A673 (cell line): ENCODE measurements at regions of chr5 and their contacts with region 1.

Region 1: DNA sequence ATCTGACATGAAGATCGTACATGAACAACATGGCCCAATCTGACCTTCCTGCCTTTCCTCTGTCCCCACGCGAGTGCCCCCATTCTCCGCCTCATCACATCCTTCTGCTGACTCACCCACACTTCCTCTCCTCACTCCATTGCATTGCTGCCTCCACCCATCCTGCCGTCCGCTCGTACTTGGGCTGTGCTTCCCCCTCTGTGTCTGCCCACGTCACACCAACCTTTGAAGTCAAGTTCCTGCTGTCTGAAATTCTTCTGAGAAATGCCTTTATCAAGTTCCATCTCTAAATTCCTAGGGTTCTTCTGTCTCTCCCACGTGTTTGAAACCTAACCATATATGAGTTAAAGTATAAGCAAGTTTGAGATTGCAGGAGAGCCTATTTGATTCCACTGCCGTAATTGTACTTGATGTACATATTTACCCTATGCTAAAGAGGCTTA is 18.0 kb upstream of the STARD4 start:
- DNase-seq: peak; percentile 54
- H3K4me3 ChIP-seq: no peak overlapping the region
- H3K27ac ChIP-seq: no peak overlapping the region
- H3K4me1 ChIP-seq: no peaks in the 10 kb centered on the region
- H3K27me3 ChIP-seq: no peaks in the 10 kb centered on the region
- CTCF ChIP-seq: no peak

Region 2: DNA sequence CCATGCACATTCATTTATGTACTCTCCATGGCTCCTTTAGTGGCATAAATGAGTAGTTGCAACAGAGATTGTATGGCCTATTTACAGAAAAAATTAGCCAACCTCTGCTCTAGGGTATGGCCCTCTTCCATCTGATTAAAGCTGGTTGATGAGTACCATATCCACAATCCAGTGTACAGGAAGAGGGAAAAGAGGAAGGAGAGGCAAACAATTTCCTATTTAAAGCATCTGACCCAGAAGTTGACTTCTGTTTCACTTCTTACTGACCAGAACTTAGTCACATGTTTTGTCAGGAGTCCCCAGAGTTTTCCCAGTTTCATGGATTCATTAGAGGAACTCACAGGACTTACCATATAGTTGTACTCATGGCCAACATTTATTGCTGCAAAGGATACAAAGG is 50.6 kb after region 1 on chr5:
- CTCF ChIA-PET with region 1: no interaction called
- POLR2A ChIA-PET with region 1: no interaction called
- intact Hi-C with region 1: no loop called
- DNase-seq: no peak
- H3K4me3 ChIP-seq: no peak overlapping the region
- H3K27ac ChIP-seq: no peak overlapping the region
- H3K4me1 ChIP-seq: no peaks in the 10 kb centered on the region
- H3K27me3 ChIP-seq: no peaks in the 10 kb centered on the region
- CTCF ChIP-seq: no peak

Region 3: GRCh38 chr5:111834926-111835598 is 304.7 kb after region 1 on chr5:
- CTCF ChIA-PET with region 1: interaction called, 13 read pairs
- POLR2A ChIA-PET with region 1: no interaction called
- intact Hi-C with region 1: no loop called
- DNase-seq: no peak
- H3K4me3 ChIP-seq: no peak overlapping the region
- H3K27ac ChIP-seq: no peak overlapping the region
- H3K4me1 ChIP-seq: no peaks in the 10 kb centered on the region
- H3K27me3 ChIP-seq: peaks cover 52% of the 10 kb centered on the region
- CTCF ChIP-seq: no peak

Region 4: GRCh38 chr5:111863801-111864200 is 333.5 kb after region 1 on chr5:
- CTCF ChIA-PET with region 1: no interaction called
- POLR2A ChIA-PET with region 1: no interaction called
- intact Hi-C with region 1: no loop called
- DNase-seq: no peak
- H3K4me3 ChIP-seq: no peak overlapping the region
- H3K27ac ChIP-seq: no peak overlapping the region
- H3K4me1 ChIP-seq: no peaks in the 10 kb centered on the region
- H3K27me3 ChIP-seq: no peaks in the 10 kb centered on the region
- CTCF ChIP-seq: no peak

Region 5: DNA sequence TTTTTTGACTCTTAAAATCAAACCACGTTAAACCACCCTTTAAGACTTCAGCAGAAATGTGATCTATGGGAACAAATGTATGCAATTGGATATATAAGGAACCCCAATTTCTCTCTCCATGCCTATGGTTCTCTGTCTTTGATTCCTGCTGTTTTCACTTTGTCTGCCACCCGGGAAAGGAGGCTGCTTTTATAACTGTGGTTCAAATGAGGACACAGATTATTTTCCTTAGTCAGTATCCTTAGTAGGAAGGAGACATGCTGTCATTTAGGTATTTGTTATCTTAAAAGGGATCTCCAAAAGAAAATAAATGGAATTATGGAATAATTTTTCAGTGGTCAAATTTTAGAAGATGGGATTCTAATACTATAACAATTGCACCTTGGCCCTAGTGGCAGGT is 402.8 kb after region 1 on chr5:
- CTCF ChIA-PET with region 1: interaction called, 12 read pairs
- POLR2A ChIA-PET with region 1: no interaction called
- intact Hi-C with region 1: no loop called
- DNase-seq: no peak
- H3K4me3 ChIP-seq: no peak overlapping the region
- H3K27ac ChIP-seq: no peak overlapping the region
- H3K4me1 ChIP-seq: no peaks in the 10 kb centered on the region
- H3K27me3 ChIP-seq: no peaks in the 10 kb centered on the region
- CTCF ChIP-seq: no peak

Region 6: GRCh38 chr5:112097768-112098167 is 567.4 kb after region 1 on chr5:
- CTCF ChIA-PET with region 1: interaction called, 13 read pairs
- POLR2A ChIA-PET with region 1: no interaction called
- intact Hi-C with region 1: no loop called
- DNase-seq: no peak
- H3K4me3 ChIP-seq: no peak overlapping the region
- H3K27ac ChIP-seq: no peak overlapping the region
- H3K4me1 ChIP-seq: no peaks in the 10 kb centered on the region
- H3K27me3 ChIP-seq: no peaks in the 10 kb centered on the region
- CTCF ChIP-seq: no peak

Region 7: DNA sequence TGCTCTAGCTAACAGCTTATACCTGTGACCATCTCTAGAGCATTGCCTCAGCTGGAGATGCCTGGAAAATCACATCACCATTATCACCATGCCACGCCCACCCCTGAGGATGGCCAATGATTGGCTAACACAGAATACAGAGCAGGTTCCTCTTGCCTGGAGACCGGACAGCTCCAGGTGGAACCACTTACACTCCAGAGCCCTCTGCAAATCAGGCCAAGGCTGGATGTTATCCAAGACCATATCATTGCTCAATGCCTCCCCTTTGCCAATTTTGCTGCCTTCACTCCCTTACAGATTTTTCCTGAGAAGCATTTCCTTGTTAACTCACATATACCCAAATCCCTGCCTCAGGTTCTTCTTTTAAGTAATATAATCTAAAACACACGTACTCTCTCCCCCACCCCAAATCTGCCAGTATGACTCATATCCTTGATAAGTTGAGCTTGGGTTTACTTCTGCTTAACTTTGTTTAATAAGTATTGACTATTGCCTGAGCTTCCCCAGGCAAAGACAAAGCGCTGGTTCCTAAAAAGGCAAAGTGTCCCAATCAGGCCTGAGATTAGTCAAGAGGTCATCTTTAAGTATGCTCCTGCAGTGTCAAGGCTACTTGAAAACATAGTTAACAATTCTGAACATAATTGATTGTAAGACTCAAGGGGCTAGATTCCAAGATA is 579.1 kb after region 1 on chr5:
- CTCF ChIA-PET with region 1: interaction called, 11 read pairs
- POLR2A ChIA-PET with region 1: no interaction called
- intact Hi-C with region 1: no loop called
- DNase-seq: peak; percentile 3
- H3K4me3 ChIP-seq: no peak overlapping the region
- H3K27ac ChIP-seq: no peak overlapping the region
- H3K4me1 ChIP-seq: no peaks in the 10 kb centered on the region
- H3K27me3 ChIP-seq: no peaks in the 10 kb centered on the region
- CTCF ChIP-seq: no peak